Transverse colon (tissue), 4 donors: ENCODE measurements at regions of chr2 and their contacts with region 1.

Region 1: GRCh38 chr2:85042330-85042729 is 71.4 kb downstream of the KCMF1 start:
- DNase-seq: no peak
- H3K4me3 ChIP-seq: no peak overlapping the region
- H3K27ac ChIP-seq: no peak overlapping the region
- H3K4me1 ChIP-seq: no peaks in the 10 kb centered on the region
- H3K27me3 ChIP-seq: no peaks in the 10 kb centered on the region
- CTCF ChIP-seq: no peak
- EP300 ChIP-seq: no peak
- POLR2A ChIP-seq: no peak

Region 2: GRCh38 chr2:84980263-84980983 is 61.9 kb before region 1 on chr2:
- in situ Hi-C with region 1: no loop called
- intact Hi-C with region 1: no loop called
- DNase-seq: no peak
- H3K4me3 ChIP-seq: no peak overlapping the region
- H3K27ac ChIP-seq: no peak overlapping the region
- H3K4me1 ChIP-seq: peaks cover 4 to 66% (median 15%) of the 10 kb centered on the region in 4 donors
- H3K27me3 ChIP-seq: no peaks in the 10 kb centered on the region
- CTCF ChIP-seq: no peak
- EP300 ChIP-seq: no peak
- POLR2A ChIP-seq: no peak

Region 3: GRCh38 chr2:85116207-85116606 is 73.9 kb after region 1 on chr2:
- in situ Hi-C with region 1: no loop called
- intact Hi-C with region 1: loop called (anchors 2 kb)
- DNase-seq: no peak
- H3K4me3 ChIP-seq: no peak overlapping the region
- H3K27ac ChIP-seq: no peak overlapping the region
- H3K4me1 ChIP-seq: no peaks in the 10 kb centered on the region
- H3K27me3 ChIP-seq: peaks cover 9% of the 10 kb centered on the region
- CTCF ChIP-seq: no peak
- EP300 ChIP-seq: no peak
- POLR2A ChIP-seq: no peak